ENCODE measurements at regions of chr2 and their contacts with region 1.

Region 1: DNA sequence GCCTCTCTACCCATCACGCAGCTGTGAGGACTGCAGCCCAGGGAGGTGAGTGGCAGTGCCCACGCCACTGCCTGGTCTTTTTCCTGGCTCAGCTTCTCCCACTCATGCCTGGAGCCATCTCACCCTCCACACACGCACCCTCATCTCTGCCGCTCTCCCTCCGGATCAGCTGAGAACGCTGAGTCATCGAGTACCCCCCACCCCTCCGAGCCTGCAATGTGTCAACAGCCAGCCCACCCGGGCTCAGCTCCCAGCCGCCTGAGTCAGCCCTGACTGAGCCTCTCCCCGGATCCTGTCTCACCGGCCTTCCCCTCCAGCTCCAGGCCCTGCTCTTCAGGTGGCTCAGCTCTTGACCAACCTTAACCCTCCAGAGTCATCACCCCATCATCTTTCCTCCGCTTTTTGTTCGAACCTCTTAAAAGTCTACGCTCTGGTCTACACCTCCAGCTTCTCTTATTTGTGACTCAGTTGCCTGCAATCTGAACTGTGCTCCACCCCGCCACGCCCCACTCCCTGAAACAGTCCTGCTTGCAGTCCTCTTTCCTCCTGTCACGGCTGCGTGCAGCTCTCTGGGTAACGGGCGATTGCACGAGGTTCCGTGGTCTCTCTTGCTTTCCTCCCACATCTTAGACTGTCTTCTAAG is 94.4 kb upstream of the ASAP2 start:
- DNase-seq: no peak
- ATAC-seq: no peak
- H3K4me3 Mint-ChIP-seq: no peak overlapping the region
- H3K27ac Mint-ChIP-seq: no peak overlapping the region
- H3K4me1 Mint-ChIP-seq: peaks cover 19% of the 10 kb centered on the region
- H3K27me3 Mint-ChIP-seq: no peaks in the 10 kb centered on the region
- CTCF ChIP-seq: no peak

Region 2: DNA sequence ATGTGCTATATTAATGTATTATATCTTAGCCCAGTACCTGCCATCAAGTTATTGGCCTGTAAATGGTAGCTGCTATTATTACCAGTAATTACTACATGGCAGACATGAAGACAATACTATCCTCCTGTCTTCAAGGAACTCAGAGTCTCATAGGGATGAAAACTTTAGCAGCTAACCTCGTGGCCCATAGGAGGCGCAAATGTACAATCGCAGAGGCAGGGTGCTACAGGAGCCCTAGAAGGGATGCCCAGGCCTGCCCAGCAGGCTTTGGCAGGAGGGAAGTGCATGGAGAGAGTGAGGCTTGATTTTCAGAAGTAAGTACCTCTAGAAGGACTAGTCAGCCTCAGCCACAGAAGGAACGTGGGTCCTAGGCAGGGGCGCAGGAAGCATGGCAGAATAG is 230.1 kb before region 1 on chr2:
- CTCF ChIA-PET with region 1: interaction called, 27 read pairs
- POLR2A ChIA-PET with region 1: no interaction called
- DNase-seq: peak; percentile 76
- ATAC-seq: peak; percentile 97
- H3K4me3 Mint-ChIP-seq: no peak overlapping the region
- H3K27ac Mint-ChIP-seq: no peak overlapping the region
- H3K4me1 Mint-ChIP-seq: peaks cover 14% of the 10 kb centered on the region
- H3K27me3 Mint-ChIP-seq: no peaks in the 10 kb centered on the region
- CTCF ChIP-seq: peak; percentile 53

Region 3: DNA sequence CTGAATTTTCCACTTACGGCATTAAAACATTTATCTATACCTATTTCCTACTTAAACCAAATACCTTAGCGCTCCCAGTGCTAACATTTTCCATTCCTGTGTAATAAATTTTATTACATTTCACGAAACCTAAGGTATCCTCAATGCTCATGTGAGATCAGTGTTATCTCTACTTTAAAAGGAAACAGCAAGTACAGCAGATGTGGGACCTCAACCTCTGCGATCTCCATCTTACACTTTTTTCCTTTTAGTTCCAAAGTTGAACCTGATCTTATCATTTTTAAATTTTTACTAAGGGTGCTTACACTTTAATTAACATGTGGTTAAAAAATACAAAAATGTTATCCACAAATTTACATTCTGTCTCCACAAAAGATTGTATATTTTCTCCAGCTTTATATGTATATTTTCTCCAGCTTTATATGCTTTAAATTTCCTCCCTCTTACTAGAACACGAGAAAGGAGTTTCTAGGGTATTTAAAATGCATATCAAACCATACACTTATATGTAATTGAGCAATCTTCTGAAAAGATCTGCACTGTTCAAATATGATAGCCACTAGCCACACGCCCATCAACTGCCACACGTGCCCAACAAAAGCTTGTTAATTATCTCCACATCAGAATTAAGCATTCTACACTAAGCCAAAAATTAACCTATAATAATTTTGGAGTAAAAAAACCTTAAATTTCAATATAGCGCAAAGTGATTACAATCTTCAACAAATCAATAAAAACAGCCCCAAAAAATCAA is 146.8 kb before region 1 on chr2:
- CTCF ChIA-PET with region 1: no interaction called
- POLR2A ChIA-PET with region 1: no interaction called
- DNase-seq: no peak
- ATAC-seq: no peak
- H3K4me3 Mint-ChIP-seq: no peak overlapping the region
- H3K27ac Mint-ChIP-seq: no peak overlapping the region
- H3K4me1 Mint-ChIP-seq: no peaks in the 10 kb centered on the region
- H3K27me3 Mint-ChIP-seq: no peaks in the 10 kb centered on the region
- CTCF ChIP-seq: no peak

Region 4: GRCh38 chr2:8985561-8986326 is 126.5 kb before region 1 on chr2:
- CTCF ChIA-PET with region 1: interaction called, 14 read pairs
- POLR2A ChIA-PET with region 1: no interaction called
- DNase-seq: no peak
- ATAC-seq: no peak
- H3K4me3 Mint-ChIP-seq: no peak overlapping the region
- H3K27ac Mint-ChIP-seq: no peak overlapping the region; the same call in 1 of the 2 replicates
- H3K4me1 Mint-ChIP-seq: peaks cover 29% of the 10 kb centered on the region
- H3K27me3 Mint-ChIP-seq: no peaks in the 10 kb centered on the region
- CTCF ChIP-seq: no peak

Region 5: GRCh38 chr2:8993196-8993901 is 118.9 kb before region 1 on chr2:
- CTCF ChIA-PET with region 1: interaction called, 14 read pairs
- POLR2A ChIA-PET with region 1: no interaction called
- DNase-seq: no peak
- ATAC-seq: no peak
- H3K4me3 Mint-ChIP-seq: no peak overlapping the region
- H3K27ac Mint-ChIP-seq: no peak overlapping the region
- H3K4me1 Mint-ChIP-seq: peaks cover 30% of the 10 kb centered on the region
- H3K27me3 Mint-ChIP-seq: no peaks in the 10 kb centered on the region
- CTCF ChIP-seq: no peak

Region 6: DNA sequence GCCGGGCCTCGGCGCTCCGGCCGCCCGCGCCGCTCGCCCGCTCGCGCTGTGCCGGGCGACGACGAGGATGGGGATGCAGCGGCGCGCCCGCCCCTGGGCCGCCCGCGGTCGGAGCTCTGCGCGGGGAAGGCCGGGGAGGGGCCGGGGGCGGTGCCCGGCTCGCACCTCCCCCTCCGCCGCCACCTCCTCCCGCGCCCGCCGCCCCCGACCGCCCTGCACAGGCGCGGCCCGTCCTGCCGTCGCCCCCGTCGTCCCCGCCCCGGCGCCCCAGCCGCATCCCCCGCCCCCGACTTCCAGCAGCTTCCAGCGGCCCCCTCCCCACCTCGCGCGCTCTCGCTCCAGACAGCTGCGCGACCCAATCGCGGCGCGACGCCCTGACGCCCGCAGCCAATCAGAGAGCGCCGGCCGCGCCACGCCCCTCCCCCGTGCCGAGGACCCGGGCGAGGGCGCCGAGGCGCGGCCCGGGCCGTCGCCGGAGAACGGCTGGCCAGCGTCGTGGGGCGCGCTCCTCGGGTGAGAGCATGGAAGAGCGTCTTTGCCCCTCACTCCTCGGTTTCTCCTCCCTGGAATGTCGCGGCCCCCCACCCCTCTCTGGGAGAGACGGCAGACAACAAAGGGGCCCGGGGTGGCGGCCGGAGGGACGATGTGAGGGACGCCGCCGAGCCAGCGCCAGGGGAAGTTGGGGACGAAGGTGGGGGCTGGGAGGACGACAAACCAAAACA is 108.4 kb before region 1 on chr2 and contains the start of gene MBOAT2:
- CTCF ChIA-PET with region 1: interaction called, 14 read pairs
- POLR2A ChIA-PET with region 1: no interaction called
- DNase-seq: peak; percentile 91
- ATAC-seq: peak; percentile 86
- H3K4me3 Mint-ChIP-seq: peak within 1 kb of the TSS; percentile 80
- H3K27ac Mint-ChIP-seq: peak within 1 kb of the TSS; percentile 55
- H3K4me1 Mint-ChIP-seq: peaks cover 33% of the 10 kb centered on the region
- H3K27me3 Mint-ChIP-seq: no peaks in the 10 kb centered on the region
- CTCF ChIP-seq: no peak
- total RNA-seq, gene MBOAT2: 19.2 to 24.7 TPM (median 22.5 TPM) in 3 replicates

Region 7: GRCh38 chr2:9095690-9096351 is 16.4 kb before region 1 on chr2:
- CTCF ChIA-PET with region 1: interaction called, 50 read pairs
- POLR2A ChIA-PET with region 1: no interaction called
- DNase-seq: peak; percentile 67
- ATAC-seq: peak; percentile 95
- H3K4me3 Mint-ChIP-seq: peak overlapping the region; percentile 56
- H3K27ac Mint-ChIP-seq: no peak overlapping the region
- H3K4me1 Mint-ChIP-seq: peaks cover 19% of the 10 kb centered on the region
- H3K27me3 Mint-ChIP-seq: peaks cover 18% of the 10 kb centered on the region
- CTCF ChIP-seq: no peak

Region 8: DNA sequence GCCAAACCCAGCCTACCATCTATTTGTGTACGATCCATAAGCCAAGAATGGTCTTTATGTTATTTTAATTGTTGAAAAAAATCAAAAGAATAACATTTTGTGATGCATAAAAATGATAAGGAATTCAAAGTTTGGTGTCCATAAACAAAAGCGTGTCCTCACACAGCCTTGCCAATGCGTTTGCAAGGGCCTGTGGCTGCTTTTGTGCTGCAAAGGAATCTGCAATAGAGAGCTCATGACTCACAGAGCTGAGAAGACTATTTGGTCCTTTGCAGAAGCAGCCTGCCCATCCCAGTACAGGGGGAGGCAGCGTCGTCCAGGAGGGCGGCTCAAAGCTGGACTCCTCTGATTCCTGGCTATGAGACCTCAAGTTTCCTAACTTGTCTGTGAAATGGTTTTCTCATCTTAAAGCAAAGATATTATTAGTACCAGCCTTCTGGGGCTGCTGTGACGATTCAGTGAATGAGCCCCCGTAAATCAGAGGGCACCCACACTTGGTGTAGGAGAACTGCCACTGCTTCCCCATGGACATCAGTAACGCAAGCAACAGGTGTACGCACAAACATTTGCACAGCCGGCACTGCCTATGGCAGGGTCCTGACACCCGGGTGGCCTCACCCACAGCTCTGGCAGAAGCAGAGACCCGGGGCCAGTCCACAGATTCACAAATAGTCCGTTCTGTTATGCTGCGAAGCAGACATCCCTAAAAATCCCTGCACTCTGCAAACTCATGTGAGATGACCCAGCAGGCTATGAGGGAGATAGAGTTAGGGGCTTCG is 23.8 kb after region 1 on chr2:
- CTCF ChIA-PET with region 1: interaction called, 46 read pairs
- POLR2A ChIA-PET with region 1: no interaction called
- DNase-seq: no peak
- ATAC-seq: no peak
- H3K4me3 Mint-ChIP-seq: no peak overlapping the region
- H3K27ac Mint-ChIP-seq: no peak overlapping the region
- H3K4me1 Mint-ChIP-seq: peaks cover 16% of the 10 kb centered on the region
- H3K27me3 Mint-ChIP-seq: peaks cover 19% of the 10 kb centered on the region
- CTCF ChIP-seq: no peak

Region 9: DNA sequence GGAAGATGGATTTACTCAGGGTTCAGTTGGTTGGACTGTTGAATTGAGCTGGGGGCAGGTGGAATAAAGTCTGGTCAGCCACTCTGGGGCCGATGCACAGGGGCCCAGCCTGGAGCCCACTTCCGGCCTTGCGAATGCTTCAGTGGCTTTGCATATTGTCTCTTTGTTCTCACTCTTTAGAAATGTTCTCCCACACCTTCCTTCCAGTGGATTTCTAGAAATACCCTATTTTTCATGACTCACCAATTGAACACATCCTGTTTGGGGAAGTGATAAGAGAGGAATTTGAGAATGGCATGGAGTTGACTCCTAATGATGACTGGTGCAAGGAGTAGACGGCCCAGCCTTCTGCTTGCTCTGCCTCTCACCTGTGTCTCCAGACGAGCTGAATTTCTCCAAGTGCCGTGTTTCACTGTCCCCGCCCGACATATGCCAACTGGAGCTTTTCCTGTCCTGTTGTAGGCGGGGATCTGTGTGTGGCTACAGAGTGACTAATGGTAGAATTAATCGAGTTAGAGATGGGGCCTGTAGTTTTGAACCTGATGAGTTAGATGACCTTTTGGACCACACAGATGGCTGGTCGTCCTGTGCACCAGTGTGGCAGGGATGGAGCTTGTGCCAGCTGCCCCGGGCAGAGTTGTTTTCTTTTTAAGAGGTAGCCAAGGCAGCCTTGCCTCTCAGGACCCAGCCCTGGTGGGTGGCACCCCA is 122.6 kb after region 1 on chr2:
- CTCF ChIA-PET with region 1: no interaction called
- POLR2A ChIA-PET with region 1: no interaction called
- DNase-seq: no peak
- ATAC-seq: no peak
- H3K4me3 Mint-ChIP-seq: no peak overlapping the region
- H3K27ac Mint-ChIP-seq: peak overlapping the region; percentile 60; the same call in 1 of the 2 replicates
- H3K4me1 Mint-ChIP-seq: peaks cover 21% of the 10 kb centered on the region
- H3K27me3 Mint-ChIP-seq: no peaks in the 10 kb centered on the region
- CTCF ChIP-seq: no peak

Region 10: DNA sequence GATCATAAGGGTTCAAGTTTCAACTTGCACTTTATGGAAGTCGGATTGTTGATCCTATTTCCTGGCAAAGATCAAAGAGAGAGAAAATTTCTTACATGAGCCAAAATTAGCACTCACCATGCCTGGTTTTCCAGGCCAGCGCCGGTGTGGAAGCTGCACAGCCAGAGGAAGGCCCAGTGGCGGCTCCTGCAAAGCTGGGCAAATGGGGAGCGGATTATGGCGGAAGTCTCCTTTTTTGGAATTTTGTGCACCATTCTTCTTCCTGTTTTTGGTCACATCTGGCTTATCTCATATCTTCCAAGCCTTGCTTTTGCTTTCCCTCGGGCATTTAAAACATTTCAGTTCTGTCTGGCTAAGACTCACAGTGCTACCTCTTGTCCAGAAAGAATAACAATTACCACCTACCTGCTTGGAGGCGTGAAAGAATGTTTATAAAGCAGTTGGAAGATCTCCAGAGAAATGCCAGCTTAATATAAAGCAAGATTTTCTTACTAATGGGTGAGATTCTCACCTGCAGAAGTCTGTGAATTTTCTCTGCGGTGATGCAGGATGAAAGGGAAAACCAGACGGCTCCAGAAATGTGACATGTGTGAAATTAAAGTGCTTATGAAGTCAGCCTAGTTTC is 188.7 kb after region 1 on chr2:
- CTCF ChIA-PET with region 1: no interaction called
- POLR2A ChIA-PET with region 1: no interaction called
- DNase-seq: no peak
- ATAC-seq: no peak
- H3K4me3 Mint-ChIP-seq: no peak overlapping the region
- H3K27ac Mint-ChIP-seq: peak overlapping the region; percentile 57; the same call in 1 of the 2 replicates
- H3K4me1 Mint-ChIP-seq: peaks cover 9% of the 10 kb centered on the region
- H3K27me3 Mint-ChIP-seq: no peaks in the 10 kb centered on the region
- CTCF ChIP-seq: no peak

Region 11: GRCh38 chr2:9311488-9311887 is 199.3 kb after region 1 on chr2:
- CTCF ChIA-PET with region 1: no interaction called
- POLR2A ChIA-PET with region 1: no interaction called
- DNase-seq: no peak
- ATAC-seq: no peak
- H3K4me3 Mint-ChIP-seq: no peak overlapping the region
- H3K27ac Mint-ChIP-seq: peak overlapping the region; percentile 26
- H3K4me1 Mint-ChIP-seq: peaks cover 29% of the 10 kb centered on the region
- H3K27me3 Mint-ChIP-seq: no peaks in the 10 kb centered on the region
- CTCF ChIP-seq: no peak